B cell (primary cell): ENCODE measurements at regions of chr14 and their contacts with region 1.

Region 1: DNA sequence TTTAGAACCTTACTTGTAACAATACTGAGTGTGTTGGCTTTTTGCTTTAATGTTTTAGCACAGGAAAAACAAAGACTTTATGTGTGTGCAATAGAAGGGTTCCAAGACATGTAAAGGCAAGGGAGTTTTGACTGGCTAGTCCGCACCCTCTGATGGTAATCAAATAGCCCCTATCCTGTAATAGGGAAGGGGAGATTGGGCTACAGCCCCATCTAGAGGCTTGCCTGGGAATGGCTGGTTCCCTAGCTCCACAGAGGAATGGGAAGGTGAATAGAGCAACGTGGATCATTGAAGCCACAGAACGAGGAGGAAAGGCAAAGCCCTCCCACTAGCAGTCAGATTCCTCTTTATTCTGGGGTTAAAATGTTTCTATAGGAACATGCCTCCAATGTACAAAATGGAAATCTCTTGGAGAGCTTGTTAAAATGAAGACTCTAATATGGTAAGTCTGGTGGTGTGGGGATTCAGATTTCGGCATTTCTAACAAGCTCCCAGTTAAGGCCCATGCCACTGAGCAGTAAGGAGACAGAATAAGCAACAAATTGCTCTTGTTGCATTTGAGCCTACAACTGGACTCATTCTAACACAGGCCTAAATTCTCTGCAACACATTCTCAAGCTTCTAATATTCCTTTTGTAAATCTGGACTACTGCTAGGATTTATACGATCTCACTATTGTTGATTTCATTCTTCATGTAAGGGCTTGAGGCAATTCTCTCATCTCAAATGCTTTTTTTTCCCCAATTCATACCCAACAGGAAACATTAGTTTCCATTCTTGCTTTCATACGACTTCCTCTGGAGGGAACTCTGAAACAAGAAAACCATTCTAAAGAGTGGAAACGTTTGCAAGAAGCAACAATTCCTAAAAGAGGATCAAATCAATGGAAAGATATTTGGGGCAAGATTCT is 57.1 kb downstream of the NIN start:
- DNase-seq: peak; percentile 48
- ATAC-seq: peak; percentile 56
- H3K4me3 ChIP-seq: no peak overlapping the region
- H3K4me3 Mint-ChIP-seq: no peak overlapping the region
- H3K27ac ChIP-seq: peak overlapping the region in 1 of 2 donors; percentile 11
- H3K27ac Mint-ChIP-seq: peak overlapping the region; percentile 17
- H3K4me1 ChIP-seq: peaks cover 13 to 16% of the 10 kb centered on the region in 2 donors
- H3K4me1 Mint-ChIP-seq: peaks cover 16% of the 10 kb centered on the region
- H3K27me3 ChIP-seq: no peaks in the 10 kb centered on the region
- H3K27me3 Mint-ChIP-seq: no peaks in the 10 kb centered on the region
- CTCF ChIP-seq: peak; percentile 87

Region 2: GRCh38 chr14:50599700-50600444 is 174.0 kb before region 1 on chr14:
- CTCF ChIA-PET with region 1: interaction called, 54 read pairs
- POLR2A ChIA-PET with region 1: no interaction called
- intact Hi-C with region 1: loop called (anchors 1 kb)
- DNase-seq: peak; percentile 46
- ATAC-seq: no peak
- H3K4me3 ChIP-seq: no peak overlapping the region
- H3K4me3 Mint-ChIP-seq: no peak overlapping the region
- H3K27ac ChIP-seq: no peak overlapping the region
- H3K27ac Mint-ChIP-seq: no peak overlapping the region
- H3K4me1 ChIP-seq: no peaks in the 10 kb centered on the region
- H3K4me1 Mint-ChIP-seq: no peaks in the 10 kb centered on the region
- H3K27me3 ChIP-seq: no peaks in the 10 kb centered on the region
- H3K27me3 Mint-ChIP-seq: no peaks in the 10 kb centered on the region
- CTCF ChIP-seq: peak; percentile 50

Region 3: DNA sequence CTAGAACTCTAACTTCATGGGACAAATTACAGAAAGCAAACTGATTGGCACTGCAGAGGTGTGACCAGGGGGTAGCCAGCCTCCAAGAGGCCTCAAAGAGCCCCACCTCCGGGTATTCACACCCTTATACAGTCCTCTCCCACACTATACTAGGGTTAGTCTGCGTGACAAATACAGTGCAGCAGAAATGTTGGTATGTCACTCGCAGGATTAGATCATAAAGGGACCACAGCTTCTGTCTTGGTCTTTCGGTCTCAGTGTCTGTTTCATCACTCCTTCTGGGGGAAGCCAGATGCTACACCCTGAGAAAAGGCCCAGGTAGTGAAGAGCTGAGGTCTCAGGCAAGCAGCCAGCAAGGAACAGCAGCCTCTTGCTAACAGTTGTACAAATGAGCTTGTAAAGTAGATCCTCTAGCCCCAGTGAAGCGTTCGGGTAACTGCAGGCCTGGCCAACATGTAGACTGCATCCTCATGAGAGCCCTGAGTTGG is 36.9 kb before region 1 on chr14:
- CTCF ChIA-PET with region 1: interaction called, 17 read pairs
- POLR2A ChIA-PET with region 1: no interaction called
- intact Hi-C with region 1: no loop called
- DNase-seq: no peak
- ATAC-seq: no peak
- H3K4me3 ChIP-seq: no peak overlapping the region
- H3K4me3 Mint-ChIP-seq: no peak overlapping the region
- H3K27ac ChIP-seq: peak overlapping the region; percentile 3 to 18
- H3K27ac Mint-ChIP-seq: no peak overlapping the region
- H3K4me1 ChIP-seq: peaks cover 3 to 4% of the 10 kb centered on the region in 2 donors
- H3K4me1 Mint-ChIP-seq: peaks cover 5% of the 10 kb centered on the region
- H3K27me3 ChIP-seq: no peaks in the 10 kb centered on the region
- H3K27me3 Mint-ChIP-seq: no peaks in the 10 kb centered on the region
- CTCF ChIP-seq: no peak

Region 4: GRCh38 chr14:50762001-50762930 is 11.6 kb before region 1 on chr14:
- CTCF ChIA-PET with region 1: interaction called, 45 read pairs
- POLR2A ChIA-PET with region 1: no interaction called
- intact Hi-C with region 1: loop called (anchors 2 kb)
- DNase-seq: no peak
- ATAC-seq: no peak
- H3K4me3 ChIP-seq: no peak overlapping the region
- H3K4me3 Mint-ChIP-seq: no peak overlapping the region
- H3K27ac ChIP-seq: peak overlapping the region in 1 of 2 donors; percentile 53
- H3K27ac Mint-ChIP-seq: peak overlapping the region; percentile 41
- H3K4me1 ChIP-seq: peaks cover under 1 to 3% of the 10 kb centered on the region in 2 donors
- H3K4me1 Mint-ChIP-seq: no peaks in the 10 kb centered on the region
- H3K27me3 ChIP-seq: no peaks in the 10 kb centered on the region
- H3K27me3 Mint-ChIP-seq: no peaks in the 10 kb centered on the region
- CTCF ChIP-seq: no peak

Region 5: GRCh38 chr14:50823051-50823761 is 49.3 kb after region 1 on chr14:
- CTCF ChIA-PET with region 1: interaction called, 30 read pairs
- POLR2A ChIA-PET with region 1: interaction called, 3 read pairs
- intact Hi-C with region 1: no loop called
- DNase-seq: peak; percentile 52
- ATAC-seq: peak; percentile 41
- H3K4me3 ChIP-seq: peak overlapping the region; percentile 23 to 60 (median 42)
- H3K4me3 Mint-ChIP-seq: peak overlapping the region; percentile 85
- H3K27ac ChIP-seq: peak overlapping the region; percentile 71 to 92
- H3K27ac Mint-ChIP-seq: peak overlapping the region; percentile 92
- H3K4me1 ChIP-seq: peaks cover 78 to 86% of the 10 kb centered on the region in 2 donors
- H3K4me1 Mint-ChIP-seq: peaks cover 91% of the 10 kb centered on the region
- H3K27me3 ChIP-seq: no peaks in the 10 kb centered on the region
- H3K27me3 Mint-ChIP-seq: no peaks in the 10 kb centered on the region
- CTCF ChIP-seq: no peak

Region 6: GRCh38 chr14:51056421-51056820 is 282.5 kb after region 1 on chr14:
- CTCF ChIA-PET with region 1: no interaction called
- POLR2A ChIA-PET with region 1: no interaction called
- intact Hi-C with region 1: no loop called
- DNase-seq: no peak
- ATAC-seq: no peak
- H3K4me3 ChIP-seq: no peak overlapping the region
- H3K4me3 Mint-ChIP-seq: no peak overlapping the region
- H3K27ac ChIP-seq: no peak overlapping the region
- H3K27ac Mint-ChIP-seq: no peak overlapping the region
- H3K4me1 ChIP-seq: no peaks in the 10 kb centered on the region
- H3K4me1 Mint-ChIP-seq: no peaks in the 10 kb centered on the region
- H3K27me3 ChIP-seq: no peaks in the 10 kb centered on the region
- H3K27me3 Mint-ChIP-seq: no peaks in the 10 kb centered on the region
- CTCF ChIP-seq: no peak